Activated CD8-positive, alpha-beta T cell treated with anti-CD3 and anti-CD28 coated beads for 36 hours (primary cell): ENCODE measurements at regions of chr19 and their contacts with region 1.

Region 1: GRCh38 chr19:34963573-34964409 is at the start of gene ZNF792:
- DNase-seq: peak; percentile 62
- ATAC-seq: peak; percentile 76
- H3K4me3 Mint-ChIP-seq: peak within 1 kb of the TSS; percentile 92
- H3K27ac Mint-ChIP-seq: peak within 1 kb of the TSS; percentile 88
- H3K4me1 Mint-ChIP-seq: peaks cover 23% of the 10 kb centered on the region
- H3K27me3 Mint-ChIP-seq: no peaks in the 10 kb centered on the region
- CTCF ChIP-seq: no peak
- total RNA-seq, gene ZNF792: 5.1 to 5.6 TPM

Region 2: GRCh38 chr19:34999498-35000341 is 35.9 kb after region 1 on chr19 and contains the start of gene GRAMD1A:
- CTCF ChIA-PET with region 1: no interaction called
- POLR2A ChIA-PET with region 1: interaction called, 10 read pairs
- intact Hi-C with region 1: no loop called
- DNase-seq: peak; percentile 77
- ATAC-seq: peak; percentile 54
- H3K4me3 Mint-ChIP-seq: peak within 1 kb of the TSS; percentile 99
- H3K27ac Mint-ChIP-seq: peak within 1 kb of the TSS; percentile 97
- H3K4me1 Mint-ChIP-seq: peaks cover 56% of the 10 kb centered on the region
- H3K27me3 Mint-ChIP-seq: no peaks in the 10 kb centered on the region
- CTCF ChIP-seq: no peak
- total RNA-seq, gene GRAMD1A: 128 to 134 TPM